ENCODE measurements at regions of chr3 and their contacts with region 1.

Region 1: DNA sequence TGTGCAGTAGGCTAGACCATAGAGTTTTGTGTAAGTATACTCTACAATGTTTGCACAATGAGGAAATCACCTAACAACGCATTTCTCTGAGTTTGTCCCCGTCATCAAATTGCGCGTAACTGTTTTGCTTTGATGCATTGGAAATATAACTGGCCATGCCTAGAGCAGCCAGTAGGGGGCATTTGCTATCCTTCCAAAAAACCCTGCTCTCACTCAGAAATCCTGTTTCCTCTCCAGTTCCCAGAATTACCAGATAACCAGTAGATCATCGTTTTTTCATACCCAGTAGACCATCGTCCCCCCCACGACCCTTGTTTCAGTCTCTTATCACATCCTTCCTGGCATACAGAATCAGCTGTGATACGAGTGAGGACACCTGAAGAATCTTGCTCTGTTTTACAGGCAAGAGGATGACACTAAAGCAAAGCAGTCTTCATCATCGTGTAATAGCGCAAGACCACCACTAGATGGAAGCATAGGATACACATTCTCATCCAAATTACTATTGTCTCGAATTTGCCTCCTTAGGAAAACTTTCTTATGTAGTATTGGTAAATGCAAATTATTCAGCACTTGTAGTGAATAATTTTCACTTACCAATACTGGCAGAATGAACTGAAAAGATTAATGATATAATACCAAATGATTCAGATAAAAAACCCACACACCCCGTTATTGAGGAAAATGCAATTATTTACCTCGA is 4.4 kb upstream of the GABRR3 start:
- DNase-seq: peak in 1 of 2 donors; percentile 59
- ATAC-seq: peak; percentile 91

Region 2: GRCh38 chr3:98329392-98330124 is 290.1 kb after region 1 on chr3:
- intact Hi-C with region 1: loop called in 1 of 2 experiments (anchors 5 kb)
- DNase-seq: peak in 1 of 2 donors; percentile 32
- ATAC-seq: peak; percentile 49

Region 3: DNA sequence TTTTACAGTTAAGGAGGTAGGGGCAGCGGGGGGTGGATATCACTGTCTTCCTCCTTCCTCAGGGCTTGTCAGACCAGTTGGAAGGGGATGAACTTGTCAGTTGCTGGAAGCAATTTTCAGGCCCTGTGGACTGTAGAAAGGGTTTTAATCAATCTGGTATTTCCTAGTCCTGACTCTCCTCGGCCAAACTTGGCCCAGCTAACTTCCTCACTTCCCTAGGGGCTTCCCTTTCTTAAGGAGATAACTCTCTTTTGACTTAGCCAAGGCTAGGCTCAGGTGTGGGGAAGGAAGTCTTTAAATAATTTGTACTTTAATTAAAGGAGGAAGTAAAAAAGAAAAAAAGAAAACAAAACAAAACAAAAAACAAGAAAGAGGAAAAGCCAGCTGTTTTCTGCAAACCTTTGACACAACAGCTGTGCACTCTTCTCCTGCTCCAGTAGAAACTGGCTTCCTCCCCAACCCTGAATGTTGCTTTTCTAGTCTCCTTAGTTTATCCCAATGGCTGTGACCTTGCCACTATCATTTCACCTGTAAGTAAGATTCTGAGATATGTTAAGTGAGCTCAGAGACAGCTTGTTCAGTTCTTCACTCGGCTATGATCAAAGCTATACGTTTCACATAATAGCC is 670.7 kb after region 1 on chr3:
- intact Hi-C with region 1: no loop called
- DNase-seq: no peak
- ATAC-seq: no peak